Brain microvascular endothelial cell (primary cell): ENCODE measurements at regions of chr22 and their contacts with region 1.

Region 1: GRCh38 chr22:45435544-45436139 is 22.1 kb downstream of the RIBC2 start:
- DNase-seq: peak; percentile 87
- H3K4me3 ChIP-seq: no peak overlapping the region
- H3K27ac ChIP-seq: no peak overlapping the region
- H3K27me3 ChIP-seq: no peaks in the 10 kb centered on the region
- CTCF ChIP-seq: peak; percentile 99

Region 2: DNA sequence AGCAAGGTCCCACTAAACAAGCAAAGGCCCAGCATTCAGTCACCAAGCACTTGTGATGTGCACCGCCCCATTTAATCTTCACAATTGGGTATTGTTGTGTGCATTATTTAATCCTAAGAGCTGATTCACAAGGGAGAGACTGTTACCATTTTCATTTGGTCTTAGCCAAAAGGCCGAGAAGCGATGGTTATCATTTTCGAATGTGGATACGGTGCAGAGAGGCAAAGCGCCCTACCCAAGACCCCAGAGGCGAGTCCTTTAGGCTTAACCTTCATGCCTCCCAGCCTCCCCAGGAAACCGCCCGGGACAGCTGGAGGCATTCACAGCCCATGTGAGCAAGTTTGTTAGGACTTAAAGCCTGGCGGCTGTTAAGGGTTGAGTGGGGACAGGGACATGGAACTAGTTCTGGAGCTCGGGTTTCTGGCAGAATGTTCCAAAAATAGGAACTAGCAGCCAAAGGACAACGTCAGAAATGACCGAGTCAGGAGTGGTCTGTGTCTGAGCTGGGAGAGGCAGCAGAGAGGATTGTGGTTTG is 163.9 kb before region 1 on chr22:
- in situ Hi-C with region 1: loop called (anchors 10 kb)
- DNase-seq: no peak
- H3K4me3 ChIP-seq: no peak overlapping the region
- H3K27ac ChIP-seq: no peak overlapping the region
- H3K27me3 ChIP-seq: no peaks in the 10 kb centered on the region
- CTCF ChIP-seq: no peak

Region 3: GRCh38 chr22:45336971-45337431 is 98.6 kb before region 1 on chr22:
- in situ Hi-C with region 1: no loop called
- DNase-seq: no peak
- H3K4me3 ChIP-seq: no peak overlapping the region
- H3K27ac ChIP-seq: no peak overlapping the region
- H3K27me3 ChIP-seq: no peaks in the 10 kb centered on the region
- CTCF ChIP-seq: no peak

Region 4: GRCh38 chr22:45493286-45493771 is 57.7 kb after region 1 on chr22:
- in situ Hi-C with region 1: no loop called
- DNase-seq: no peak
- H3K4me3 ChIP-seq: no peak overlapping the region
- H3K27ac ChIP-seq: no peak overlapping the region
- H3K27me3 ChIP-seq: no peaks in the 10 kb centered on the region
- CTCF ChIP-seq: no peak